Activated naive CD8-positive, alpha-beta T cell treated with anti-CD3 and anti-CD28 coated beads, Interleukin-2, amount 10 ng/mL, durations not matched to agents 7 days and 5 days (primary cell): ENCODE measurements at regions of chr9 and their contacts with region 1.

Region 1: GRCh38 chr9:134024828-134025605 is at the start of gene BRD3OS:
- DNase-seq: peak; percentile 90
- ATAC-seq: peak; percentile 88
- H3K4me3 Mint-ChIP-seq: peak within 1 kb of the TSS; percentile 86
- H3K27ac Mint-ChIP-seq: peak within 1 kb of the TSS; percentile 48
- H3K4me1 Mint-ChIP-seq: peaks cover 3% of the 10 kb centered on the region
- H3K27me3 Mint-ChIP-seq: peaks cover 5% of the 10 kb centered on the region
- total RNA-seq, gene BRD3OS: 14.2 to 17.0 TPM

Region 2: DNA sequence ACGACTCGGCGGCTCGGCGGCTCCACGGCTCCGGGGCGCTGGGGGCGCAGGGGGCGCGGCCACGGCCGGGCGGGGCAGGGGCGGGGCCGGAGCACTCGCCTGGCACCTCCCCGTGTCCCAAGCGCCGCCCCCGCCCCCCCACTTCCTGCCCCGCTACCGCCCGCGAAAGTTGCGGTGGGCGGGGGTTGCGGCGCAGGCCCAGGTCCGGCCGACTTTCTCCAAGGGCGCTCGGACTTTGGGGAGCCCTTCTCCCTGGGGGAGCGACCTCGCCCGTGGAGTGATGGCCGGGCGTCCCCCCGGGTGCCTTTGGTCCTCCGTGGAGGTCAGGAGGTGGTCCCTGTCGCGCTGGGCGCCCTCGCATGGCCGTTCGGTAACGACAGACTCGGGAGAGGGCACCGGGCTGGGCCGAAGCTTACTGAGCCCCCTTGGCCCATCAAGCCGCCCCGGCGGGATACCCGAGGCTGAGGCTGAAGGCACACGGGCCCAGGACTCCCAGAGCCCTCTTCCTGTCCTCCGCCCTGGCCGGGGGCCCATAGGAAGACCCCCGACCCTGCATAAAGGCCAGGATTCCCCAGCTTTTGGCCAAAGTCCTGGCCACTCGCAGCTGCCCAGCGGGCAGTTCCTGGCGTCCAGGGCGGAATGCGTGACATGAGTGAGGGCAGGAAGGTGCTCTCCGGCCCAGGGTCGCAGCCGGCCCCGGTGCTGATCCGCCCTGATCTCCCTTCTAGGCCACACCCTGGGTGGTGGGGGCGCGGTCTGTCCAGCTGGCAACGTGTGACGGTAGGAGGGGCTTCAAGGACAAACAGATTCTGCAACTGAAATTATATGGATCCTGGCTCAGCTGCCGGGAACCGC is 32.0 kb before region 1 on chr9:
- POLR2A ChIA-PET with region 1: interaction called, 10 read pairs
- DNase-seq: peak; percentile 84
- ATAC-seq: peak; percentile 64
- H3K4me3 Mint-ChIP-seq: peak overlapping the region; percentile 66
- H3K27ac Mint-ChIP-seq: no peak overlapping the region
- H3K4me1 Mint-ChIP-seq: peaks cover 1% of the 10 kb centered on the region
- H3K27me3 Mint-ChIP-seq: peaks cover 9% of the 10 kb centered on the region

Region 3: DNA sequence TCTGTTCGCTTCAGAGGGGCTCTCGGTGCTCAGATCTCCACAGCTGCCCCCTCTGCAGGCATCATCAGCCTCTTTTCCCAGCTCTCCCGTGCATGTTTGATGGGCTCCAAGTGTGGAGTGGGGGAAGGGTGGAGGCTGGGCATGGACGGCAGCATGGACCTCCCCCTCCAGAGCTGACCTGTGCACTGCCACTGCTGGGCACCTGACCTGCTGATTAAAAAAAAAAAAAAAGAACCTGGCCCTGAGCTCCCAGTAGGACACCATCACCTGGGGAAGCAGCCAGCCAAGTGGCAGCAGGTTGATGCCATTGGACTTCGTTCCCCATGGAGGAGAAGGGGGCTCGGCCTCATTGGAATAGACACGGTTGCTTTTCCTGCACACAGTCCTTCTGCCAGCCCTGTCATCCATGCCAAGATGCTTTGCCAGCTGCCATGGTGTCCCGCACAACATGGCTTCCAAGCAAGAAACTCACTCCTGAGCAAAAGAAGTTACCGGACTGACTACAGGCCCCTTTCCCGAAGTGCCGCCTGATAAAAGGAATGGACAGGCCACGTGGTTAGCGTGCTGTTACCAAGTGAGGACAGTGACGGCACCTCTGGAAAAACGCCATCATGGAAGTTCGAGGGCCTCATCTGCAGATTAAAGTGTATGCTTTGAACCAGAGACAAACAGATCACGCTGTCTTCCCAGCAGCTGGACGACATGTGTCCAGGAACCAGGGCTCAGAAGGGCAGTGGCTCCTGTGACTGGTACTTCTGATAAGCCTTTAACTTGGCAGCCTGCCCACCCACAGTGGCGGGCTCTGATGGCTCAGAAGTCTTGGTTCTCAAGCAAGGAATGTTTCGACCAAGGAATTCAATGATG is 14.5 kb before region 1 on chr9:
- POLR2A ChIA-PET with region 1: no interaction called
- DNase-seq: no peak
- ATAC-seq: no peak
- H3K4me3 Mint-ChIP-seq: no peak overlapping the region
- H3K27ac Mint-ChIP-seq: no peak overlapping the region
- H3K4me1 Mint-ChIP-seq: no peaks in the 10 kb centered on the region
- H3K27me3 Mint-ChIP-seq: no peaks in the 10 kb centered on the region

Region 4: GRCh38 chr9:134066913-134067851 is 42.2 kb after region 1 on chr9:
- POLR2A ChIA-PET with region 1: interaction called, 19 read pairs
- DNase-seq: peak; percentile 65
- ATAC-seq: peak; percentile 0
- H3K4me3 Mint-ChIP-seq: peak overlapping the region; percentile 95
- H3K27ac Mint-ChIP-seq: peak overlapping the region; percentile 97
- H3K4me1 Mint-ChIP-seq: peaks cover 19% of the 10 kb centered on the region
- H3K27me3 Mint-ChIP-seq: peaks cover 21% of the 10 kb centered on the region